ENCODE measurements at regions of chr1 and their contacts with region 1.

Region 1: GRCh38 chr1:108512239-108512981 is 47.5 kb upstream of the EEIG2 start:
- DNase-seq: no peak
- H3K4me3 Mint-ChIP-seq: no peak overlapping the region
- H3K27ac Mint-ChIP-seq: no peak overlapping the region
- H3K4me1 Mint-ChIP-seq: no peaks in the 10 kb centered on the region
- H3K27me3 Mint-ChIP-seq: peaks cover 11% of the 10 kb centered on the region

Region 2: GRCh38 chr1:107430540-107431228 is 1081.7 kb before region 1 on chr1:
- CTCF ChIA-PET with region 1: no interaction called
- POLR2A ChIA-PET with region 1: no interaction called
- intact Hi-C with region 1: no loop called
- DNase-seq: peak; percentile 13
- H3K4me3 Mint-ChIP-seq: no peak overlapping the region
- H3K27ac Mint-ChIP-seq: no peak overlapping the region
- H3K4me1 Mint-ChIP-seq: no peaks in the 10 kb centered on the region
- H3K27me3 Mint-ChIP-seq: peaks cover 9% of the 10 kb centered on the region

Region 3: GRCh38 chr1:108533351-108534083 is 21.1 kb after region 1 on chr1:
- CTCF ChIA-PET with region 1: interaction called, 10 read pairs
- POLR2A ChIA-PET with region 1: no interaction called
- intact Hi-C with region 1: no loop called
- DNase-seq: peak; percentile 54
- H3K4me3 Mint-ChIP-seq: no peak overlapping the region
- H3K27ac Mint-ChIP-seq: no peak overlapping the region
- H3K4me1 Mint-ChIP-seq: peaks cover 12% of the 10 kb centered on the region
- H3K27me3 Mint-ChIP-seq: peaks cover 7% of the 10 kb centered on the region

Region 4: DNA sequence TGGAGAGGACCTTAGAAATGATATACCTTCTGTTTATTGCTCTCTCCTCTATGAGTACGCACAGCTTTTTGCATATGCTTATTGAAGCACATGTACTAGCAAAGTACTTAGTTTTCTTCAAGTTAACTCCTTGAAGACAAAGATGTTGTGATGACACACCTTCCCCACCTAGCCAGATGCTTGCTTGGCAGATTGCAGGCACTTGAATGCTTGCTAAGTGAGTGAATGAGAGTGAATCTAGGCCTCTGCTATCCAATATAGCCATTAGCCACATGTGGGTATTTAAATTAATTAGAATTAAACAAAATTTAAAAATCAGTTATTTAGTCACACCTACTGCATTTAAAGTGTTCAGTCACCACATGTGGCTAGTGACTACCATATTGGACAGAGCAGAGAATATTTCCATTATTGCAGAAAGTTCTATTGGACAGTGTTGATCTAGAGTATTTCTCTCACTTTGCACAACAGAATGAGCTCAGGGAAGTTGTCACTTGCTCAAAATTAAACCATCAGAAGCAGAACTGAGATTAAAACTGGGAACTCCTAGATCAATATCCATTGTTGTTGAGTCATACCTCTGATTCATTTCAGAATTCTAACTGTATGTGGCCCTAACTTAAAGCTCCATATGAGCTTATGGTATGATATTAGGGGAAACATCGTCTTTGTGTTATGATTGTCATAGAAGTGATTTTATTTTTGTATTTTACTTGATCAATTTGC is 38.9 kb after region 1 on chr1:
- CTCF ChIA-PET with region 1: interaction called, 10 read pairs
- POLR2A ChIA-PET with region 1: no interaction called
- intact Hi-C with region 1: no loop called
- DNase-seq: no peak
- H3K4me3 Mint-ChIP-seq: no peak overlapping the region
- H3K27ac Mint-ChIP-seq: no peak overlapping the region
- H3K4me1 Mint-ChIP-seq: peaks cover 3% of the 10 kb centered on the region
- H3K27me3 Mint-ChIP-seq: peaks cover 4% of the 10 kb centered on the region

Region 5: DNA sequence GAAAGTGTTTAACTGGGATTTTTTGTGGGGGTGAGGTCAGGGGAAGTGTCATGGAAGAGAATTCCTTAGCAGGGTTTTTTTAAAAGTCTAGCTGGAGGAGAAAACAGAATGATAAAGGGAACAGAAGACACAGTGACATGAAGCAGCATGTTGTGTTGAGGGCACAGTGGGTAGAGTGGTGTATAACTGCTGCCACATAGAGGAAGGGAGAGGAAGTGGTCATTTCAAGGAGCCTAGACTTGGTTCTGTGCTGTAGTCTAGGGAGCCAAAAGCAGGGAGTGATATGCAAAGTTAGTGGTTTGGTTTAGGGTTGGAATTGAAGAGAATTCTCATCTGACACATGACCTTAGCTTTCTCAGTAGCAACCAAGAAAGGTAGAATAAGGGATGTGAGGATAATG is 57.7 kb after region 1 on chr1:
- CTCF ChIA-PET with region 1: interaction called, 28 read pairs
- POLR2A ChIA-PET with region 1: no interaction called
- intact Hi-C with region 1: no loop called
- DNase-seq: peak; percentile 37
- H3K4me3 Mint-ChIP-seq: no peak overlapping the region
- H3K27ac Mint-ChIP-seq: no peak overlapping the region
- H3K4me1 Mint-ChIP-seq: no peaks in the 10 kb centered on the region
- H3K27me3 Mint-ChIP-seq: no peaks in the 10 kb centered on the region

Region 6: DNA sequence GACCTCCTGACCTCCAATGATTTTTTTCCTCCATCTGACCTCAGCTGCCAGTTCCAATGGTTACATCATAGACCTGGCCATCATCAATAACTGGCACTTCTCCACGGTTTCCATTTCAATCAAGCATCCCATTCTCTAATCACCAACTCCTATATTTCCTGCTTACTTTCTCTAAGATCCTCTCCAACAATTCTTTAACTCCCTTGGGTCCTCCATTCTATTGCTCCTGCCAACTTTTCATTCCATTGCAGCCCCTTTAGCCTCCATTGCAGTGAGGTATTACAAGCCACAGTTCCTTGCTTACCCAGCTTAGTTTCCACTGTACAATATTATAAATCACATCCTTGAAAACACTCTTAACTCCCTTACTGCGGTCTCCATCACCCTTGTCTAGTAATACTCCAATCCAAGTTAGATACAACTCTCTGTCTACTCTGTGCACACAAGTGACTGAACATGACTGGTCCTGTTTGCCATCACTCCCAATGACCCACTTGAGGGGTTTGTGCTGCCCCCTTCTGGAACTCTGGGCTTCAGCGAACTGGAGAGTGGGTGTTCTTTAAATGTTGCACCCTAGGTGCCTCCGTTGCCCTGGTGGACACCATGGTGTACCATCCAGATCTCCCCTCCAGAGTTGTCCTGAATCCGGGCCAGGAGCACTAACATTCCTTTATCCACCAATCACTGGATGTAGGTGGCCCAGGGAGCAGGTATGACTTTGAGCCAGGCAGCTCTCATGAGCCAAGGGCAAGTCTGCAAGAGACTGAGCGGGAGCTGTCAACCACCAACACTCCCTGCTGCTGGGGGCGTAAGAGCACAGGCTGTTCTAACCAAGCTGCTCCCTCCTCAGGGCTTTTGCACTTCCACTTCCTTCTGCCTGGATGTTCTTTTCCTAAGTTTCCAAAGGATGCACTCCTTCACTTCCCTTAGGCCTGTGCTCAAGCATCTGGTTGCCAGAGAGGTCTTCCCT is 196.6 kb after region 1 on chr1:
- CTCF ChIA-PET with region 1: interaction called, 4 read pairs
- POLR2A ChIA-PET with region 1: no interaction called
- intact Hi-C with region 1: loop called (anchors 1 kb)
- DNase-seq: peak; percentile 83
- H3K4me3 Mint-ChIP-seq: no peak overlapping the region
- H3K27ac Mint-ChIP-seq: no peak overlapping the region
- H3K4me1 Mint-ChIP-seq: peaks cover 28% of the 10 kb centered on the region
- H3K27me3 Mint-ChIP-seq: peaks cover 4% of the 10 kb centered on the region

Region 7: DNA sequence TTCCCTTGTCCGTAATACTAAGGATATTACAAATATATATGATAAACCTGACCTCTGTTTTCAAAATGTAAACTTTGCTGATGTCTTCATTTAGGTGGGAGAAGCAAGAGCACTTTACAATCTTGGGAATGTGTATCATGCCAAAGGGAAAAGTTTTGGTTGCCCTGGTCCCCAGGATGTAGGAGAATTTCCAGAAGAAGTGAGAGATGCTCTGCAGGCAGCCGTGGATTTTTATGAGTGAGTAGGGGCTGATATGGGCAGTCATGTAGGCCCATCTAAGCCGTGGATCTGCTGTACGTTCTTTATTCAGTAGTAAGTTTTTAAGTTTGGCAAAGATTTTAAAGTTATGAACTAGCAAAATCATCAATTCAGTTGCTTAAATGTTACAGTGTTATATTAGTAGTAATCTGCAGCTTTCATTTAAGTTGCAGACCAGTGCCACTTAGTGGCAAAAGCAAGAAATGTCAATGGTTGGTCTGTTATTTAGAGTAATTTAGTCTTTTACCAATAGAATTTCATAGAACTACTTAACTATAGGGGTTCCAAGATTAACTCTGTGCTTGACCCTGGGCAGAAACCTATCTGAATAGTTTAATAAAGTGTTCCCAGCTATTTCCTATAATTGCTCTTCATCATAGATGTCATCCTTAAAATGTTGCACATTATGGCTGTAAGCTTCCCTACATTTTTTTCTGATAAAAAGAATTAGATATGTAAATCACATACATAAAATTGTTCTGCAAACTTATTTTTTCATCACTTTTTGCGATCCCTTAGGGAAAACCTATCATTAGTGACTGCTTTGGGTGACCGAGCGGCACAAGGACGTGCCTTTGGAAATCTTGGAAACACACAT is 385.7 kb after region 1 on chr1:
- CTCF ChIA-PET with region 1: no interaction called
- POLR2A ChIA-PET with region 1: no interaction called
- intact Hi-C with region 1: loop called (anchors 10 kb)
- DNase-seq: no peak
- H3K4me3 Mint-ChIP-seq: no peak overlapping the region
- H3K27ac Mint-ChIP-seq: no peak overlapping the region
- H3K4me1 Mint-ChIP-seq: no peaks in the 10 kb centered on the region
- H3K27me3 Mint-ChIP-seq: no peaks in the 10 kb centered on the region

Measured in activated CD4-positive, alpha-beta memory T cell treated with anti-CD3 and anti-CD28 coated beads for 36 hours (primary cell).